Mammary epithelial cell (primary cell): ENCODE measurements at regions of chr6 and their contacts with region 1.

Region 1: GRCh38 chr6:13916230-13916944 is 8.4 kb upstream of the RNF182 start:
- DNase-seq: peak; percentile 39
- H3K4me3 ChIP-seq: no peak overlapping the region
- H3K27ac ChIP-seq: no peak overlapping the region
- H3K4me1 ChIP-seq: peaks cover 20% of the 10 kb centered on the region
- H3K27me3 ChIP-seq: no peaks in the 10 kb centered on the region
- CTCF ChIP-seq: no peak

Region 2: DNA sequence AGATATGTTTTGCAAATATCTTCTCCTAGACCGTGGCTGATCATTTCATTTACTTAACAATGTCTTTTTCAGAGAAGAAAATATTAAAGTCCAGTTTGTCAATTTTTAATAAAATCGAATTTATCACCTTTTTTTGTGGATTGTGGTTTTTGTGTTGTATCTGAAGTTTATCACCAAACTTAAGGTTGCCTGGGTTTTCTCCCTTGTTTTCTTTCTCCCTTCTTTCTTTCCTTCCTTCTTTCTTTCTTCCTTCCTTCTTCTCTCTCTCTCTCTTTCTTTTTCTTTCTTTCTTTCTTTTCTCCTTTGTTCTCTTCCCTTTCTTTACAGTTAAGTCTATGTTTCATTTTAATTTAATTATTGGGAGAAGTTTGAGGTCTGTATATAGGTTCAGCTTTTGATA is 77.0 kb after region 1 on chr6:
- CTCF ChIA-PET with region 1: no interaction called
- dilution Hi-C with region 1: no loop called
- in situ Hi-C with region 1: no loop called
- intact Hi-C with region 1: no loop called
- DNase-seq: no peak
- H3K4me3 ChIP-seq: no peak overlapping the region
- H3K27ac ChIP-seq: no peak overlapping the region
- H3K4me1 ChIP-seq: peaks cover 11% of the 10 kb centered on the region
- H3K27me3 ChIP-seq: no peaks in the 10 kb centered on the region
- CTCF ChIP-seq: no peak

Region 3: GRCh38 chr6:14059791-14060444 is 143.5 kb after region 1 on chr6:
- CTCF ChIA-PET with region 1: no interaction called
- dilution Hi-C with region 1: no loop called
- in situ Hi-C with region 1: loop called in 1 of 2 experiments (anchors 5 kb)
- intact Hi-C with region 1: no loop called
- DNase-seq: peak; percentile 79
- H3K4me3 ChIP-seq: peak overlapping the region in 2 of 3 experiments; percentile 2 to 17
- H3K27ac ChIP-seq: no peak overlapping the region
- H3K4me1 ChIP-seq: peaks cover 16% of the 10 kb centered on the region
- H3K27me3 ChIP-seq: no peaks in the 10 kb centered on the region
- CTCF ChIP-seq: no peak

Region 4: GRCh38 chr6:14144678-14145113 is 228.3 kb after region 1 on chr6:
- CTCF ChIA-PET with region 1: no interaction called
- dilution Hi-C with region 1: no loop called
- in situ Hi-C with region 1: loop called in 1 of 2 experiments (anchors 10 kb)
- intact Hi-C with region 1: no loop called
- DNase-seq: peak; percentile 30
- H3K4me3 ChIP-seq: no peak overlapping the region
- H3K27ac ChIP-seq: no peak overlapping the region
- H3K4me1 ChIP-seq: no peaks in the 10 kb centered on the region
- H3K27me3 ChIP-seq: no peaks in the 10 kb centered on the region
- CTCF ChIP-seq: peak; percentile 92 to 99